ENCODE measurements at regions of chr1 and their contacts with region 1.

Region 1: GRCh38 chr1:61453111-61453961 is 271.6 kb downstream of the TM2D1 start:
- DNase-seq: peak; percentile 92
- H3K4me3 Mint-ChIP-seq: no peak overlapping the region
- H3K27ac Mint-ChIP-seq: peak overlapping the region; percentile 90
- H3K4me1 Mint-ChIP-seq: peaks cover 13% of the 10 kb centered on the region
- H3K27me3 Mint-ChIP-seq: no peaks in the 10 kb centered on the region
- CTCF ChIP-seq: peak; percentile 58

Region 2: GRCh38 chr1:60848583-60849188 is 604.6 kb before region 1 on chr1:
- CTCF ChIA-PET with region 1: interaction called, 6 read pairs
- POLR2A ChIA-PET with region 1: no interaction called
- intact Hi-C with region 1: loop called (anchors 5 kb)
- DNase-seq: peak; percentile 38
- H3K4me3 Mint-ChIP-seq: no peak overlapping the region
- H3K27ac Mint-ChIP-seq: no peak overlapping the region
- H3K4me1 Mint-ChIP-seq: peaks cover 13% of the 10 kb centered on the region
- H3K27me3 Mint-ChIP-seq: peaks cover 20% of the 10 kb centered on the region
- CTCF ChIP-seq: peak; percentile 71

Region 3: GRCh38 chr1:60978421-60979357 is 474.6 kb before region 1 on chr1:
- CTCF ChIA-PET with region 1: interaction called, 24 read pairs
- POLR2A ChIA-PET with region 1: no interaction called
- intact Hi-C with region 1: loop called (anchors 1 kb)
- DNase-seq: peak; percentile 62
- H3K4me3 Mint-ChIP-seq: no peak overlapping the region
- H3K27ac Mint-ChIP-seq: no peak overlapping the region
- H3K4me1 Mint-ChIP-seq: peaks cover 3% of the 10 kb centered on the region
- H3K27me3 Mint-ChIP-seq: no peaks in the 10 kb centered on the region
- CTCF ChIP-seq: peak; percentile 76

Region 4: GRCh38 chr1:61056573-61057439 is 396.5 kb before region 1 on chr1:
- CTCF ChIA-PET with region 1: interaction called, 4 read pairs
- POLR2A ChIA-PET with region 1: interaction called, 15 read pairs
- intact Hi-C with region 1: no loop called
- DNase-seq: peak; percentile 63
- H3K4me3 Mint-ChIP-seq: peak overlapping the region; percentile 86
- H3K27ac Mint-ChIP-seq: peak overlapping the region; percentile 73
- H3K4me1 Mint-ChIP-seq: peaks cover 14% of the 10 kb centered on the region
- H3K27me3 Mint-ChIP-seq: no peaks in the 10 kb centered on the region
- CTCF ChIP-seq: no peak

Region 5: GRCh38 chr1:61442544-61442943 is 10.8 kb before region 1 on chr1:
- CTCF ChIA-PET with region 1: interaction called, 10 read pairs
- POLR2A ChIA-PET with region 1: interaction called, 6 read pairs
- intact Hi-C with region 1: no loop called
- DNase-seq: no peak
- H3K4me3 Mint-ChIP-seq: no peak overlapping the region
- H3K27ac Mint-ChIP-seq: no peak overlapping the region
- H3K4me1 Mint-ChIP-seq: peaks cover 6% of the 10 kb centered on the region
- H3K27me3 Mint-ChIP-seq: no peaks in the 10 kb centered on the region
- CTCF ChIP-seq: no peak

Region 6: GRCh38 chr1:61481313-61481712 is 28.0 kb after region 1 on chr1:
- CTCF ChIA-PET with region 1: no interaction called
- POLR2A ChIA-PET with region 1: interaction called, 10 read pairs
- intact Hi-C with region 1: no loop called
- DNase-seq: peak; percentile 83
- H3K4me3 Mint-ChIP-seq: peak overlapping the region; percentile 49
- H3K27ac Mint-ChIP-seq: peak overlapping the region; percentile 83
- H3K4me1 Mint-ChIP-seq: peaks cover 24% of the 10 kb centered on the region
- H3K27me3 Mint-ChIP-seq: no peaks in the 10 kb centered on the region
- CTCF ChIP-seq: no peak

Region 7: GRCh38 chr1:61552630-61553305 is 99.4 kb after region 1 on chr1:
- CTCF ChIA-PET with region 1: no interaction called
- POLR2A ChIA-PET with region 1: no interaction called
- intact Hi-C with region 1: no loop called
- DNase-seq: no peak
- H3K4me3 Mint-ChIP-seq: no peak overlapping the region
- H3K27ac Mint-ChIP-seq: no peak overlapping the region
- H3K4me1 Mint-ChIP-seq: no peaks in the 10 kb centered on the region
- H3K27me3 Mint-ChIP-seq: no peaks in the 10 kb centered on the region
- CTCF ChIP-seq: no peak

Region 8: GRCh38 chr1:61851849-61852669 is 398.7 kb after region 1 on chr1:
- CTCF ChIA-PET with region 1: no interaction called
- POLR2A ChIA-PET with region 1: no interaction called
- intact Hi-C with region 1: loop called (anchors 5 kb)
- DNase-seq: peak; percentile 74
- H3K4me3 Mint-ChIP-seq: no peak overlapping the region
- H3K27ac Mint-ChIP-seq: no peak overlapping the region
- H3K4me1 Mint-ChIP-seq: no peaks in the 10 kb centered on the region
- H3K27me3 Mint-ChIP-seq: no peaks in the 10 kb centered on the region
- CTCF ChIP-seq: peak; percentile 53